GM23248 (cell line): ENCODE measurements at regions of chr10 and their contacts with region 1.

Region 1: GRCh38 chr10:93672022-93672678 is 30.2 kb downstream of the FRA10AC1 start:
- DNase-seq: no peak
- H3K4me3 ChIP-seq: no peak overlapping the region
- H3K27ac ChIP-seq: no peak overlapping the region
- H3K4me1 ChIP-seq: no peaks in the 10 kb centered on the region
- H3K27me3 ChIP-seq: no peaks in the 10 kb centered on the region

Region 2: GRCh38 chr10:93352638-93353383 is 319.3 kb before region 1 on chr10:
- in situ Hi-C with region 1: no loop called
- DNase-seq: peak; percentile 56
- H3K4me3 ChIP-seq: no peak overlapping the region
- H3K27ac ChIP-seq: no peak overlapping the region
- H3K4me1 ChIP-seq: no peaks in the 10 kb centered on the region
- H3K27me3 ChIP-seq: no peaks in the 10 kb centered on the region

Region 3: DNA sequence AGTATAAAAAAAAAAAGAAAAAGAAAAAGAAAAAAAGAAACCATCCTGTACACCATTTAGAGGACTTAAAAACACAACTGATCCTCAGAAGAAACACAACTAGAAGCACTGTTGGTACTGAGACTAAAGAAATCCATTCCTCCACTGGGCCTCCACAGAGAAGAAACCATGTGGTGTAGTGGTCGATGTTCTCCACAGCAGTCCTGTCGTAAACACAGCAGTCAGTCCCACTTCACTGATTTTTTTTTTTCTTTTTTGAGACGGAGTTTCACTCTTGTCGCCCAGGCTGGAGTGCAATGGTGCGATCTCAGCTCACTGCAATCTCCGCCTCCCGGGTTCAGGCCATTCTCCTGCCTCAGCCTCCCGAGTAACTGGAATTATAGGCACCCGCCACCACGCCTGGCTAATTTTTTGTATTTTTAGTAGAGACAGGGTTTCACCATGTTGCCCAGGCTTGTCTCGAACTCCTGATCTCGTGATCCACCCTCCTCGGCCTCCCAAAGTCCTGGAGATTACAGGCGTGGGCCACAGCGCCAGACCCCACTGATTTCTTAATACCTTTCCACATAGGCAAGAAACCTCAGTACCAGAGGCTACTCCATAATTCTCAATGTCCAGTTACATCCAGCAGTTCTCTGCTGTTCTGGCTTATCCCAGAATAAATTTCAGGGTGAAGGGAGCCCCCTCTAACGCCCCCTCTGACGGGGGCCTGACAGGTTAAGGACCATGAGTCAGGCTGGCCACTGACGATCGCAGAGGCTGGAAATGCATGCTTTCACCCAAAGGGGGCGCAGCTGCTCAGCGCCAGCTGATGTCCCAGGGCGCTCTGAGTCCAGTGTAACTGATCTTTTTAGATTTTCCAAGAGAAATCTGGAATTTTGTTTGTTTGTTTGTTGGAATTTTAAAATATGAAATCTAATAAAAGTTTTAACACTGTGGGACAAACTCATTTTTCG is 130.5 kb before region 1 on chr10:
- in situ Hi-C with region 1: loop called (anchors 10 kb)
- DNase-seq: peak; percentile 79
- H3K4me3 ChIP-seq: peak overlapping the region; percentile 53
- H3K27ac ChIP-seq: no peak overlapping the region
- H3K4me1 ChIP-seq: no peaks in the 10 kb centered on the region
- H3K27me3 ChIP-seq: peaks cover 9% of the 10 kb centered on the region